ENCODE measurements at regions of chr6 and their contacts with region 1.

Region 1: DNA sequence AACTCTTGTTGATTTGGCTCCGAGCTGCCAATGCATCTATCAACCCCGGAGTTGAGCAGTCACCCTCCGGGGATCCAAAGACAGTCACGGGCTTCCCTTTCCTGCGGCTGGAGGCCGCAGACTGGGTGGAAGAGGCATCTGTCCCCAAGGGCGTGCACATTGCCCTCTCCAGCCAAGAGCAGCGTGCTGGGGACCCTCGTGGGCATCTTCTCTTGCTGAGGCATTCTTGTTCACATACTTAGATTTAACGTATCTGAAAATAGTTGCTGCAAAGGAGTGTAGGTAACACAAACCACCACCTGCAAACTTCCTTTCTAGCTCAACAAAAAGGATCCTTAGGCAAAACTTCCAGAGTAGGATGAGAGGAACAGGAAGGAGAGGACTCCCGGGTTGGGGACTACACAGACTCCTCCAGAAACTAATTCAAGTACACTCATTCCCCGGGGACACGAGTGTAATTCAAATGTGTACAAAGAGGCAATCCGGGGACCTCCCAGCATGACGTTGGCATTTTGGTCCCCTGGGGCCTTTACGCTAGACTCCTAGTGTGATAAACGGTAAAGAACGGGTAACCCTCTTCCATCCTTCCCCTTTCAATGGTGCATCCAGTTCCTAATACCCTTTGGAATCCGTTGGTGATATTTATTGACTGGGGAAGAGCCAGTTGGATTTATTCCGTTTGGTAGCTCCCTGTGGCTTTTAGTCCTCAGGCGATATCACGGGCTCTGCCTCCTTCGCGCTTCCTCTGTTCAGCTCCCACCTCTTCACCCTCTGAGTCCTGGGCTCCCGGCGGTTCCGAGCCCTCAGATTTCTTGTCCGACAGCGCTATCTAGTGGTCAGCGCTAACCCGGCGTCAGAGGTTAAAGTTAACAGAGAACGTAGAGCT is 2.7 kb upstream of the COL12A1 start:
- DNase-seq: peak; percentile 76 to 87
- H3K4me3 ChIP-seq: peak overlapping the region; percentile 21 to 78 (median 27)
- H3K27ac ChIP-seq: peak overlapping the region; percentile 33 to 90
- H3K4me1 ChIP-seq: peaks cover 0 to 4% of the 10 kb centered on the region in 2 donors
- H3K27me3 ChIP-seq: peaks cover 0 to 22% of the 10 kb centered on the region in 2 donors
- CTCF ChIP-seq: peak; percentile 61 to 92 (median 84)
- POLR2A ChIP-seq: no peak

Region 2: DNA sequence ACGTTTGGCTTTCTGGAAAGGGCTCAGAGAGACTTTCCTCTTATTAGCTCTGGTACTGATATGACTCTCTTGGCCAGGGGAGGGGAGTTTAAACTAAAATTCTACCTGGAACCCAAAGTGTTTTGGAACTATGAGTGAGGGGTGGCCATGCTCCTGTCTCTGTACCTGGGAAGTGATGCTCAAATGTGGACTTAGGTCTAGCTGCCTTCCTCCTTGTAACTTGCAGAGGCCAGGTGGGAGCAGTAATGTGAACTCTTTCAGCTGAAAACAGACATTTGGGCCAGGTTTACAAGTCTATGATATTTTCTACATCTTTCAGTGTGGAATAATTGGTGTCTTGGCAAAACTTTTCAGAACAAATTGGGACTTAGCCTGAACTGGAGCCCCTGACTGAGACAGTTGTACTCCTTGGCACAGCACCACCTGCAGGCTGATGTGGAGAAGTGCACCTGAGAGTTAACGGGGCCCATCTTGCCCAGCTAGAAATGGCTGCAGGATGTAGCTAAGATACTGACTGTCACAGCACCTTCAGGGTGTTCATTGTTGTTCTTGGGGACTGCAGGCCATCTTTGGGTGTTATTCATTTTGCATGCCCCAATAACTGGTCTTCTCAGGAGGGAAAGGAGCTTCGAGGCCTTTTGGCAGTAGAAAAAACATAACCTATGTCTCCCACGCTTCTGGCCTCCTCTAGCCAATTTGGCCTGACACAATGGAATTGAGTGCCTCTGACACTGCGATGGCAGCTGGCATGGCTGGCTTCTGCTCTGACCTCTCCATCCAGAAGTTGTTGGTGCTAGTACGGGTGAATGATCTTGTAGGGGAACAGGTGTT is 1475.5 kb before region 1 on chr6:
- intact Hi-C with region 1: loop called (anchors 10 kb)
- DNase-seq: peak; percentile 29 to 65
- H3K4me3 ChIP-seq: no peak overlapping the region
- H3K27ac ChIP-seq: no peak overlapping the region
- H3K4me1 ChIP-seq: no peaks in the 10 kb centered on the region
- H3K27me3 ChIP-seq: no peaks in the 10 kb centered on the region
- CTCF ChIP-seq: peak; percentile 67 to 77 (median 70)
- POLR2A ChIP-seq: no peak

Region 3: DNA sequence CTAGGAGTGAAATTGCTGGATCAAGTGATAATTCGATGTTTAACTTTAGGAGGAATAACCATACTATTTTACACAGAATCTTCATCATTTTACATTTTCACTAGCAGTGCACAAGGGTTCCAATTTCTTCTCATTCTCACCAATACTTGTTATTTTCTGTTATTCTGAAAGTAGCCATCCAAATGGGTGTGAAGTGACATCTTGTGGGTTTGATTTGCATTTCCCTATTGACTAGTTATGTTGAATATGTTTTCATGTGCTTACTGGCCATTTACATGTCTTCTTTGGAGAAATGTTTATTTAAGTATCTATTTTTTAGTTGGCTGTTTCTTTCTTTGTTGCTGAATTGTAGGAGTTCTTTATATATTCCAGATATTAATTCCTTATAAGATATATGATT is 1348.2 kb before region 1 on chr6:
- intact Hi-C with region 1: loop called (anchors 5 kb)
- DNase-seq: no peak
- H3K4me3 ChIP-seq: no peak overlapping the region
- H3K27ac ChIP-seq: no peak overlapping the region
- H3K4me1 ChIP-seq: no peaks in the 10 kb centered on the region
- H3K27me3 ChIP-seq: no peaks in the 10 kb centered on the region
- CTCF ChIP-seq: no peak
- POLR2A ChIP-seq: no peak

Region 4: DNA sequence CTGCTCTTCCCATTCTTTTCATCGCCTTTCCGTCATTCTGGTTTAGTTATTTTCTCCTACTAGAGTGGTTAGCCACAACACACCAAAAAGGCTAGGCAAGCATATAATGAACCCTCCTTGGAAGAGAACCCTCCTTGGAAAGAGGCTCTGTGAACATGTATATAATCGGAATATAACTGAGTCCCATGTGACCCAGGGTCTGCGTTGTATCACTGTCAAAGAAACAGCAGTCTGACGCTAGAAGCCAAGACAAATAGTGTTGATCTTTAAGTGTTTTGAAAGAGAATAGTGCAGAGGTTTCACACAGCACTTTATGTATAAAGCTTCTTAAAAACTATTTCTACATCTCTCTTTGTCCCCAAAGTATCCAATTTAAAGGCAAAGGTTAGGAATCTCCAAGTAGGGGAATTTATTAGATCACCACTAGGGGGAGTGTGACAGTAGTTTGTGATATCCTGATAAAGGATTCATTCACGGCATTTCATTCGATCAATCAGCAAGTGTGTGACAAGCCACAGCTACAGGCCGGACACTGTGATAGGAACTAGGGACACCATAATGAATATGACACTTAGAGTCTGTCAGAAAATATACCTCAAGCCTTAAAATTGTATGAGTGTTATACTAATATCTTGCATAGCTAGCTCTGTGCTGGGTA is 1117.3 kb before region 1 on chr6:
- intact Hi-C with region 1: loop called (anchors 10 kb)
- DNase-seq: no peak
- H3K4me3 ChIP-seq: no peak overlapping the region
- H3K27ac ChIP-seq: no peak overlapping the region
- H3K4me1 ChIP-seq: no peaks in the 10 kb centered on the region
- H3K27me3 ChIP-seq: no peaks in the 10 kb centered on the region
- CTCF ChIP-seq: peak; percentile 55 to 65 (median 62)
- POLR2A ChIP-seq: no peak

Region 5: DNA sequence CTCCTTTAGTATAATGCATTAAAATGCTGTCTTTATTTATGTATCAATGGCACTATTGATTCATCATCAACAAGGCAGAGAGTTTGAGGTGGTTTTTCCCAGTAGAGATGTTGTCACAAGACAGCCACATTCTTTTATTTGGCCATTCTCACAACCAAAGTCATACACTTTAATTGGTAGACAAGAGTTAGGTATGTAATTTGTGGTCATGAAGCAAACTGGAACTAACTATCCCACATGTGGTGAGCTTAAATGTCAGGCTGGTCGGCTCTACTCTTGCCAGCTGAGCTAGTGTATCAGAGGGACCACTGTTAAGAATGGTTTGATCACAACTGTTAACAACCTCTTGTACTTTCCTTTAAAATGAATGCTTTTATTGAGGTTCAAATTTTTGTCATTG is 797.9 kb before region 1 on chr6:
- intact Hi-C with region 1: loop called (anchors 5 kb)
- DNase-seq: no peak
- H3K4me3 ChIP-seq: no peak overlapping the region
- H3K27ac ChIP-seq: no peak overlapping the region
- H3K4me1 ChIP-seq: no peaks in the 10 kb centered on the region
- H3K27me3 ChIP-seq: no peaks in the 10 kb centered on the region
- CTCF ChIP-seq: no peak
- POLR2A ChIP-seq: no peak

Region 6: DNA sequence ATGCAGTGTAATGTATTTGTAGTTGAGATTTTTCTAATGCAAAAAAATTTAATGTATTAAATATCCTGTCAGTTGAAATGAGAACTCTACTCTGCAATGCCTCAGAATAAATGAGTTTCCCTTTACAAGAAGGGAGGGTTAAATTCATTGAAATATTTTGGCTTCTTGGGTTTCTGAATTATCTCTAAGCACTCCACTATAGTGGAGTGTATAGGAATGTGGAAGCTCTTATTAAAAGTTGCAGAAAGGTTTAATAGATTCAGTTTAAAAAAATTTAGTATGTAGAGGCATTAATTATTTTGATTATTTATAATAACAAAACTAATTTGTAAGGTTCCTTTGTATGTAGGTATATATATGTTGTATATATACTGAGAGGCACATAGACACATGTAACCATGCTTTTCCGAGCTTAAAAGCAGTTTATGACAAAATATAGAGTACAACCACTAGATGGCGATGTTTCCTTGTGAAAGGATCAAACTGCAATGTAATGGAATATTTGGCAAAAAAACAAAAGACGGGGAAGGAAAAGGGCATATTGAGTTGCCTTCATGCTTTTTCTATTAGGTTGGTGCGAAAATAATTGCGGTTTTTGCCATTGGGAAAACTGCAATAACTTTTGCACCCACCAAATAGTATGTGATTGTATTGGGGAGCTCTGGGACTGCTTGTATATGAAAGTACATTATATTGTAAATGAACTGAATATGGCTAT is 684.7 kb after region 1 on chr6:
- intact Hi-C with region 1: loop called (anchors 5 kb)
- DNase-seq: no peak
- H3K4me3 ChIP-seq: no peak overlapping the region
- H3K27ac ChIP-seq: no peak overlapping the region
- H3K4me1 ChIP-seq: no peaks in the 10 kb centered on the region
- H3K27me3 ChIP-seq: no peaks in the 10 kb centered on the region
- CTCF ChIP-seq: peak; percentile 9 to 63 (median 46)
- POLR2A ChIP-seq: no peak

Measured in breast epithelium (tissue), 4 donors.